CD8-positive, alpha-beta memory T cell (primary cell): ENCODE measurements at regions of chr19 and their contacts with region 1.

Region 1: GRCh38 chr19:43555185-43555770 is 20.0 kb downstream of the XRCC1 start:
- DNase-seq: peak; percentile 74 to 87 (median 77)
- H3K4me3 ChIP-seq: no peak overlapping the region
- H3K4me3 Mint-ChIP-seq: peak overlapping the region in 1 of 7 donors; percentile 28
- H3K27ac ChIP-seq: no peak overlapping the region
- H3K27ac Mint-ChIP-seq: peak overlapping the region; percentile 25 to 86 (median 58)
- H3K4me1 ChIP-seq: peaks cover 9% of the 10 kb centered on the region
- H3K4me1 Mint-ChIP-seq: peaks cover 16 to 20% (median 18%) of the 10 kb centered on the region in 3 donors
- H3K27me3 ChIP-seq: no peaks in the 10 kb centered on the region
- H3K27me3 Mint-ChIP-seq: no peaks in the 10 kb centered on the region

Region 2: DNA sequence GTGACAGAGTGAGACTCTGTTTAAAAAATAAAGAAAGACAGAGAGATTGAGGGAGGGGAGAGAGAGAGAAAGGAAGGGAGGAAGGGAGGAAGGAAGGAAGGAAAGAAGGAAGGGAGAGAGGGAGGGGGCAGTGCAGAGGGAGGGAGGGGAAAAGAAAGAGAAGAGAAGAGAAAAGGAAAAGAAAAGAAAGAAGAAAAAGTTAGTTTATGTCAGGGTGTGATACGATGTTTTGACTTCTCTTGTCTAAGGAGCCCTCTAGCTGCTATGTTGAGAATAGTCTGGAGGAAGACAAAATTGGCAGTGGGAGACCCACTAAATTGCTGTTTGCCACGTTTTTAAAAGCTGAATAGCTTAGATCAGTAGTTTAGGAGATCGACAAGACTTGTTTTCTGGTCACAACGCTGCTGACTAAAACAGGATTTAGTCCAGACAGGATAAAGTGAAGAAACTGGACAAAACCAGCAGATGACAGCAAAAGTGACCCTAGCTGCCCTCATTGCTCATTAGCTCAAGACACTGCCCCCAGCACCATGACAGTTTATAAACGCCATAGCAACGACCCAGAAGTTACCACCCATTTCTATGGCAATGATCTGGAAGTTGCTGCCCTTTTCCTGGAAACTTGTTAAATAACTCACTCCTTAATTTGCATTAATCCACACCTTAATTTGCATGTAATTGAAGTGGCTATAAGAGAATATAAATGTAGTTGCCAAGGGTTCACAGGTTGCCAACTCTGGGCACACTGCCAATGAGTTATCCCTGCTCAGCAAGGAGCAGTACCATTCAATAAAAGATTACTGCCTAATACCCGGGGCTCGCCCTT is 129.5 kb before region 1 on chr19:
- CTCF ChIA-PET with region 1: no interaction called
- POLR2A ChIA-PET with region 1: no interaction called
- DNase-seq: no peak
- H3K4me3 ChIP-seq: no peak overlapping the region
- H3K4me3 Mint-ChIP-seq: no peak overlapping the region
- H3K27ac ChIP-seq: no peak overlapping the region
- H3K27ac Mint-ChIP-seq: peak overlapping the region in 3 of 8 donors; percentile 7 to 60 (median 43)
- H3K4me1 ChIP-seq: no peaks in the 10 kb centered on the region
- H3K4me1 Mint-ChIP-seq: peaks cover 1 to 10% (median 5%) of the 10 kb centered on the region in 3 donors
- H3K27me3 ChIP-seq: no peaks in the 10 kb centered on the region
- H3K27me3 Mint-ChIP-seq: peaks cover 5 to 9% of the 10 kb centered on the region in 2 donors

Region 3: GRCh38 chr19:43498233-43498842 is 56.9 kb before region 1 on chr19:
- CTCF ChIA-PET with region 1: no interaction called
- POLR2A ChIA-PET with region 1: no interaction called
- DNase-seq: no peak
- H3K4me3 ChIP-seq: no peak overlapping the region
- H3K4me3 Mint-ChIP-seq: no peak overlapping the region
- H3K27ac ChIP-seq: no peak overlapping the region
- H3K27ac Mint-ChIP-seq: peak overlapping the region in 7 of 8 donors; percentile 8 to 92 (median 81)
- H3K4me1 ChIP-seq: peaks cover 9% of the 10 kb centered on the region
- H3K4me1 Mint-ChIP-seq: peaks cover 12 to 26% (median 23%) of the 10 kb centered on the region in 3 donors
- H3K27me3 ChIP-seq: no peaks in the 10 kb centered on the region
- H3K27me3 Mint-ChIP-seq: no peaks in the 10 kb centered on the region

Region 4: GRCh38 chr19:43511324-43511723 is 44.0 kb before region 1 on chr19:
- CTCF ChIA-PET with region 1: no interaction called
- POLR2A ChIA-PET with region 1: no interaction called
- DNase-seq: no peak
- H3K4me3 ChIP-seq: no peak overlapping the region
- H3K4me3 Mint-ChIP-seq: peak overlapping the region in 1 of 7 donors; percentile 50
- H3K27ac ChIP-seq: no peak overlapping the region
- H3K27ac Mint-ChIP-seq: no peak overlapping the region
- H3K4me1 ChIP-seq: no peaks in the 10 kb centered on the region
- H3K4me1 Mint-ChIP-seq: no peaks in the 10 kb centered on the region
- H3K27me3 ChIP-seq: no peaks in the 10 kb centered on the region
- H3K27me3 Mint-ChIP-seq: no peaks in the 10 kb centered on the region

Region 5: GRCh38 chr19:43532962-43533545 is 22.2 kb before region 1 on chr19 and contains the start of gene ZNF575:
- CTCF ChIA-PET with region 1: interaction called, 36 read pairs
- POLR2A ChIA-PET with region 1: interaction called, 5 read pairs
- DNase-seq: peak; percentile 70 to 89 (median 81)
- H3K4me3 ChIP-seq: peak within 1 kb of the TSS; percentile 98
- H3K4me3 Mint-ChIP-seq: peak within 1 kb of the TSS; percentile 87 to 99 (median 92)
- H3K27ac ChIP-seq: peak within 1 kb of the TSS; percentile 79
- H3K27ac Mint-ChIP-seq: peak within 1 kb of the TSS; percentile 89 to 99 (median 96)
- H3K4me1 ChIP-seq: peaks cover 8% of the 10 kb centered on the region
- H3K4me1 Mint-ChIP-seq: peaks cover 18 to 22% (median 21%) of the 10 kb centered on the region in 3 donors
- H3K27me3 ChIP-seq: no peaks in the 10 kb centered on the region
- H3K27me3 Mint-ChIP-seq: no peaks in the 10 kb centered on the region
- total RNA-seq, gene ZNF575: 2.1 to 2.3 TPM

Region 6: DNA sequence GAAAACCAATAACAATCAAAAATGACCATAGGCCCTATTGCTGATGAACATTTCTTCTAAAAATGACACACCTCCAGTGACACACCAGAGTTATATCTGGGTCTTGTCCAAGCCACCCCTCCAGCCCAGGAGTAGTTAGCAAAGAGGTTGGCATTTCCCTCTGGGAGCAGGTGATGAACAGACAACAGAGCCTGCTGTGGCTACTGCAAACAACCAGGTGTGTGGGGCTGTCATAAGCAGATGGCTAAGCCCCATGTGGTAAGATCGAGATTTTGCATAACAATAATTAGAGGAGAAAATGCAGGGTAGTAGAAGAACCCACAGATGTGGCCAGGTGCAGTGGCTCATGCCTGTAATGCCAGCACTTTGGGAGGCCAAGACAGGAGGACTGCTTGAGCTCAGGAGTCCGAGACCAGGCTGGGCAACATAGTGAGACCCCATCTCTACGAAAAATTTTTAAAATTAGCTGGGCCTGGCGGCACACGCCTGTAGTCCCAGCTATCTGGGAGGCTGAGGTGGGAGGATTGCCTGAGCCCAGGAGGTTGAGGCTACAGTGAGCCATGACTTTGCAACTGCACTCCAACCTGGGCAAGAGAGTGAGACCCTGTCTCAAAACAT is 15.0 kb after region 1 on chr19:
- CTCF ChIA-PET with region 1: interaction called, 22 read pairs
- POLR2A ChIA-PET with region 1: no interaction called
- DNase-seq: no peak
- H3K4me3 ChIP-seq: no peak overlapping the region
- H3K4me3 Mint-ChIP-seq: peak overlapping the region in 1 of 7 donors; percentile 64
- H3K27ac ChIP-seq: no peak overlapping the region
- H3K27ac Mint-ChIP-seq: peak overlapping the region; percentile 11 to 84 (median 70)
- H3K4me1 ChIP-seq: peaks cover 8% of the 10 kb centered on the region
- H3K4me1 Mint-ChIP-seq: peaks cover 31 to 62% (median 53%) of the 10 kb centered on the region in 3 donors
- H3K27me3 ChIP-seq: no peaks in the 10 kb centered on the region
- H3K27me3 Mint-ChIP-seq: no peaks in the 10 kb centered on the region

Region 7: GRCh38 chr19:43575156-43575950 is 20.1 kb after region 1 on chr19 and contains the starts of genes PINLYP and XRCC1:
- CTCF ChIA-PET with region 1: interaction called, 22 read pairs
- POLR2A ChIA-PET with region 1: no interaction called
- DNase-seq: peak; percentile 95 to 99 (median 96)
- H3K4me3 ChIP-seq: peak within 1 kb of the TSS; percentile 94
- H3K4me3 Mint-ChIP-seq: peak within 1 kb of the TSS; percentile 95 to 99 (median 96)
- H3K27ac ChIP-seq: peak within 1 kb of the TSS; percentile 96
- H3K27ac Mint-ChIP-seq: peak within 1 kb of the TSS; percentile 98 to 100 (median 98)
- H3K4me1 ChIP-seq: peaks cover 20% of the 10 kb centered on the region
- H3K4me1 Mint-ChIP-seq: peaks cover 37 to 79% (median 56%) of the 10 kb centered on the region in 3 donors
- H3K27me3 ChIP-seq: no peaks in the 10 kb centered on the region
- H3K27me3 Mint-ChIP-seq: no peaks in the 10 kb centered on the region
- total RNA-seq, gene PINLYP: 9.9 to 13.8 TPM
- total RNA-seq, gene XRCC1: 37.0 to 37.2 TPM

Region 8: GRCh38 chr19:43589678-43590077 is 34.4 kb after region 1 on chr19:
- CTCF ChIA-PET with region 1: interaction called, 124 read pairs
- POLR2A ChIA-PET with region 1: interaction called, 23 read pairs
- DNase-seq: no peak
- H3K4me3 ChIP-seq: no peak overlapping the region
- H3K4me3 Mint-ChIP-seq: peak overlapping the region in 1 of 7 donors; percentile 42
- H3K27ac ChIP-seq: no peak overlapping the region
- H3K27ac Mint-ChIP-seq: peak overlapping the region in 6 of 8 donors; percentile 72 to 96 (median 88)
- H3K4me1 ChIP-seq: peaks cover 17% of the 10 kb centered on the region
- H3K4me1 Mint-ChIP-seq: peaks cover 24 to 32% (median 25%) of the 10 kb centered on the region in 3 donors
- H3K27me3 ChIP-seq: no peaks in the 10 kb centered on the region
- H3K27me3 Mint-ChIP-seq: no peaks in the 10 kb centered on the region

Region 9: GRCh38 chr19:43668406-43669158 is 113.3 kb after region 1 on chr19:
- CTCF ChIA-PET with region 1: interaction called, 10 read pairs
- POLR2A ChIA-PET with region 1: no interaction called
- DNase-seq: peak; percentile 91 to 96 (median 92)
- H3K4me3 ChIP-seq: peak overlapping the region; percentile 63
- H3K4me3 Mint-ChIP-seq: peak overlapping the region; percentile 88 to 92 (median 89)
- H3K27ac ChIP-seq: peak overlapping the region; percentile 60
- H3K27ac Mint-ChIP-seq: peak overlapping the region; percentile 47 to 92 (median 86)
- H3K4me1 ChIP-seq: peaks cover 29% of the 10 kb centered on the region
- H3K4me1 Mint-ChIP-seq: peaks cover 40 to 56% (median 54%) of the 10 kb centered on the region in 3 donors
- H3K27me3 ChIP-seq: no peaks in the 10 kb centered on the region
- H3K27me3 Mint-ChIP-seq: peaks cover 0 to 9% of the 10 kb centered on the region in 2 donors